Ovary (tissue), 10 donors: ENCODE measurements at regions of chr4 and their contacts with region 1.

Region 1: DNA sequence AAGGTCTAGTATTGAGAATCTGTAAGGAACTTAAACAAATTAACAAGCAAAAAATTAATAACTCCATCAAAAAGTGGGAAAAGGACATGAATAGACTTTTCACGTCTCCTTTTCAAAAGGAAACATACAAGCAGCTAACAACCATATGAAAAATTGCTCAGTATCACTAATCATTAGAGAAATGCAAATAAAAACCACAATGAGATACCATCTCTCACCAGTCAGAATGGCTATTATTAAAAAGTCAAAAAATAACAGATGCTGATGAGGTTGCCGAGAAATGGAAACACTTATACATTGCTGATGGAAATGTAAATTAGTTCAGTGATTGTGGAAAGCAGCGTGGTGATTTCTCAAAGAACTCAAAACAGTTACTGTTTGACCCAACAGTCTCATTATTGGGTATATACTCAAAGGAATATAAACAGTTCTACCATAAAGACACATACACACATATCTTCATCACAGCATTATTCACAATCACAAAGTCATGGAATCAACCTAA is 410.4 kb upstream of the SMIM31 start:
- DNase-seq: no peak
- H3K4me3 ChIP-seq: no peak overlapping the region
- H3K27ac ChIP-seq: no peak overlapping the region
- H3K4me1 ChIP-seq: no peaks in the 10 kb centered on the region
- H3K27me3 ChIP-seq: no peaks in the 10 kb centered on the region
- CTCF ChIP-seq: no peak
- EP300 ChIP-seq: no peak
- POLR2A ChIP-seq: no peak

Region 2: DNA sequence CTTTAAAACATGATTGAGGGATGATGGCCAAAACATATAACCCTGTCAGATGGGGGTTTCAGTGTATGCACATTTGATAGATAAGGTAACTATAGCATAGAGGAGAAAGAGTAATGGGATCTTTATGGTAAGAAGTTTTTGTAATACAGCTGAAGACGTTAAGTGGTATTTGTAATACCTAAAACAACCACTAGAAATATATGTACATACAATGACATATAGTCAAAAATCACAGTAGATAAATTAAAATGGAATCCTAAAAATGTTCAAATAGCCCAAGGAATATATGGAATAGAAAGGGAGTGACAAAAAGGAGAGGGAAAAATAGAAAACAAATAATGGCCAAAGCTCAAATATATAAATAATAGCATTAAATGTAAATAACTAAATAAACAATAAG is 1808.4 kb before region 1 on chr4:
- intact Hi-C with region 1: loop called in 1 of 4 experiments (anchors 5 kb)
- DNase-seq: no peak
- H3K4me3 ChIP-seq: no peak overlapping the region
- H3K27ac ChIP-seq: no peak overlapping the region
- H3K4me1 ChIP-seq: no peaks in the 10 kb centered on the region
- H3K27me3 ChIP-seq: no peaks in the 10 kb centered on the region
- CTCF ChIP-seq: no peak
- EP300 ChIP-seq: no peak
- POLR2A ChIP-seq: no peak

Region 3: GRCh38 chr4:163815776-163816175 is 527.7 kb before region 1 on chr4:
- intact Hi-C with region 1: no loop called
- DNase-seq: no peak
- H3K4me3 ChIP-seq: no peak overlapping the region
- H3K27ac ChIP-seq: no peak overlapping the region
- H3K4me1 ChIP-seq: no peaks in the 10 kb centered on the region
- H3K27me3 ChIP-seq: no peaks in the 10 kb centered on the region
- CTCF ChIP-seq: no peak
- EP300 ChIP-seq: no peak
- POLR2A ChIP-seq: no peak